HepG2 (cell line): ENCODE measurements at regions of chr7 and their contacts with region 1.

Region 1: DNA sequence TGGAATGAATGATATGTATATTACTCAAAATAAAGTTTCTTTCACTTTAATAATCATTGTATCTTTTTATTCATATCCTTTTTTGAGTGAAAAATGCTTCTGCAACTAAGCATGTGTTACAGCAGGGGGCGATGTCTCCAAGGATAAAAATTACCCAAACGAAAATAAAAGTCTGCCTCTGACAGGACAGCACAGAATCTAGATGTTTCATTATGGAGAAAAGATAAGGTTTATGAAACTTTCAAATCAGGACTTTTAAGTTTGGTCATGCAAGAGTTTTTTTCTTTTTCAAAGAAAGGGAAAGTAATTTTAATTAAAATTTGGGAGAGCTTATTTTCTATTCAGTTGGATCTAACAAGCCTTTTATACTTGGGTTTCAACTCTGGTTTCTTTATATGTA is 48.4 kb downstream of the TES start:
- DNase-seq: peak; percentile 22
- ATAC-seq: no peak
- H3K4me3 ChIP-seq: no peak overlapping the region
- H3K27ac ChIP-seq: no peak overlapping the region
- H3K4me1 ChIP-seq: no peaks in the 10 kb centered on the region
- H3K27me3 ChIP-seq: no peaks in the 10 kb centered on the region
- CTCF ChIP-seq: peak; percentile 66
- EP300 ChIP-seq: no peak
- POLR2A ChIP-seq: no peak
- RAD21 ChIP-seq: peak; percentile 57; the same call in 1 of the 2 replicates

Region 2: GRCh38 chr7:116340943-116341907 is 82.5 kb after region 1 on chr7:
- CTCF ChIA-PET with region 1: no interaction called
- POLR2A ChIA-PET with region 1: no interaction called
- in situ Hi-C with region 1: no loop called
- intact Hi-C with region 1: loop called (anchors 1 kb)
- DNase-seq: no peak
- ATAC-seq: peak; percentile 64; the same call in 2 of the 3 replicates
- H3K4me3 ChIP-seq: no peak overlapping the region
- H3K27ac ChIP-seq: no peak overlapping the region
- H3K4me1 ChIP-seq: peaks cover 11% of the 10 kb centered on the region; the same call in 1 of the 2 replicates
- H3K27me3 ChIP-seq: no peaks in the 10 kb centered on the region
- CTCF ChIP-seq: peak; percentile 26; the same call in 1 of the 2 replicates
- EP300 ChIP-seq: no peak
- POLR2A ChIP-seq: no peak
- RAD21 ChIP-seq: no peak

Region 3: GRCh38 chr7:116518961-116519360 is 260.2 kb after region 1 on chr7:
- CTCF ChIA-PET with region 1: no interaction called
- POLR2A ChIA-PET with region 1: no interaction called
- in situ Hi-C with region 1: no loop called
- intact Hi-C with region 1: no loop called
- DNase-seq: no peak
- ATAC-seq: no peak
- H3K4me3 ChIP-seq: no peak overlapping the region
- H3K27ac ChIP-seq: no peak overlapping the region
- H3K4me1 ChIP-seq: no peaks in the 10 kb centered on the region
- H3K27me3 ChIP-seq: peaks cover 0 to 16% of the 10 kb centered on the region in 2 experiments; a peak in 2 of 5 replicates
- CTCF ChIP-seq: no peak
- EP300 ChIP-seq: no peak
- POLR2A ChIP-seq: no peak
- RAD21 ChIP-seq: no peak

Region 4: DNA sequence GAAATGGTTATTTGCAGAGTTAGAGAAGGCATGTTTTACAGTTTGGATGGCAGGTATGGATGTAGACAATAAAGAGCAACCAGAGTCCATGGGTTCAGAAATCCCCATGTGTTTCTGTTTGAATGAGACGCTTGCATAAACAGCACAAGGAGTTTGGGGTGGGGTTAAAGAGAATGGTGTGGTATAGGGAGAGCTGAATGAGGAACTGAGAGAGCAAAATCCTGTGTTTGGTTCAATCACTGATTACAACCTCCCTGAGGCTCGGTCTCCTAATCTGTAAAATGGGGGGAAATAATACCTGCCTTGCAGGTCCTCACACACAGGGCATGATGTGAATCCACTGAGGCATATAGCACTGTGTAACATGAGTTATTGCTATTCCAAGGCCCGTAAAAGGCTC is 289.8 kb after region 1 on chr7:
- CTCF ChIA-PET with region 1: no interaction called
- POLR2A ChIA-PET with region 1: no interaction called
- in situ Hi-C with region 1: no loop called
- intact Hi-C with region 1: no loop called
- DNase-seq: no peak
- ATAC-seq: no peak
- H3K4me3 ChIP-seq: no peak overlapping the region
- H3K27ac ChIP-seq: no peak overlapping the region
- H3K4me1 ChIP-seq: no peaks in the 10 kb centered on the region
- H3K27me3 ChIP-seq: no peaks in the 10 kb centered on the region
- CTCF ChIP-seq: no peak
- EP300 ChIP-seq: no peak
- POLR2A ChIP-seq: no peak
- RAD21 ChIP-seq: no peak